ENCODE measurements at regions of chr20 and their contacts with region 1.

Region 1: DNA sequence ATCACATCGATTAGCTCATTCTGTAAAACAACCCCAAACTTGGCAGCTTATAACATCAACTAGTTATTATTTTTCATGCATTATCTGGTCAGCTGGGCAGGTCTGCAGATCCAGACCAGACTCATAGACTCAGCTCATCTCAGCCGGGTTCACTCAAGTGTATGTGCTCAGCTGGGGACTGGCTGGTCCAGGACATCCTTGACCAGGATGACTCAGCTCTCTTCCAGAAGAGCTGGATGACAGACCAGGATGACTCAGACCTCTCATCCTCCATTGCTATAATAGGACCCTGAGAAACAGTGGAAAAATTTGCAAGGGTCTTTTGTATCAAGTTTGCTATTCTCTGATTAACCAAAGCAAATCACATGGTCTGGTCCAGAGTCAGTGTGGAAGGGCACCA is 312.5 kb upstream of the PLCB4 start:
- DNase-seq: peak; percentile 57
- H3K4me3 ChIP-seq: no peak overlapping the region
- H3K27ac ChIP-seq: no peak overlapping the region
- H3K27me3 ChIP-seq: no peaks in the 10 kb centered on the region
- CTCF ChIP-seq: no peak

Region 2: DNA sequence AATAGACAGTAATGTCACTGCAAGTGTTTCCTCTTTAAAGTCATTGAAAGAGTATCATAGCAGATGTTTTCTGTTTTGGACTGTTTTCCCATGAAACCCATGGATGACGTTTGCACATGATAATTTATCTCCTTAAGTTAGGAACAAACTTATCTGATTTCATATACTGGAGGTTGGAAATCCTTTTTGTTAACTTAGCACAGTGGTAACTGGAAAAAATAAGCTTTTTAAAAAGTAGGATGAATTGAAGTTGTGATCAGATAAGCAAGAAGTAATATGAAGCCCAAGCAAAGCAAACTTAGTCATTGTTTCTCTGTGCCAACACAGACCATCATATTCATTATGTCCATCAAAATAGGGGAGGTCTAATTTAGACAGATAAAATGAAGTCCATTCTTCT is 374.1 kb after region 1 on chr20:
- CTCF ChIA-PET with region 1: interaction called, 12 read pairs
- POLR2A ChIA-PET with region 1: no interaction called
- DNase-seq: no peak
- H3K4me3 ChIP-seq: no peak overlapping the region
- H3K27ac ChIP-seq: no peak overlapping the region
- H3K27me3 ChIP-seq: no peaks in the 10 kb centered on the region
- CTCF ChIP-seq: no peak

Region 3: GRCh38 chr20:9244811-9245210 is 488.4 kb after region 1 on chr20:
- CTCF ChIA-PET with region 1: interaction called, 10 read pairs
- POLR2A ChIA-PET with region 1: no interaction called
- DNase-seq: no peak
- H3K4me3 ChIP-seq: no peak overlapping the region
- H3K27ac ChIP-seq: no peak overlapping the region
- H3K27me3 ChIP-seq: no peaks in the 10 kb centered on the region
- CTCF ChIP-seq: no peak

Region 4: DNA sequence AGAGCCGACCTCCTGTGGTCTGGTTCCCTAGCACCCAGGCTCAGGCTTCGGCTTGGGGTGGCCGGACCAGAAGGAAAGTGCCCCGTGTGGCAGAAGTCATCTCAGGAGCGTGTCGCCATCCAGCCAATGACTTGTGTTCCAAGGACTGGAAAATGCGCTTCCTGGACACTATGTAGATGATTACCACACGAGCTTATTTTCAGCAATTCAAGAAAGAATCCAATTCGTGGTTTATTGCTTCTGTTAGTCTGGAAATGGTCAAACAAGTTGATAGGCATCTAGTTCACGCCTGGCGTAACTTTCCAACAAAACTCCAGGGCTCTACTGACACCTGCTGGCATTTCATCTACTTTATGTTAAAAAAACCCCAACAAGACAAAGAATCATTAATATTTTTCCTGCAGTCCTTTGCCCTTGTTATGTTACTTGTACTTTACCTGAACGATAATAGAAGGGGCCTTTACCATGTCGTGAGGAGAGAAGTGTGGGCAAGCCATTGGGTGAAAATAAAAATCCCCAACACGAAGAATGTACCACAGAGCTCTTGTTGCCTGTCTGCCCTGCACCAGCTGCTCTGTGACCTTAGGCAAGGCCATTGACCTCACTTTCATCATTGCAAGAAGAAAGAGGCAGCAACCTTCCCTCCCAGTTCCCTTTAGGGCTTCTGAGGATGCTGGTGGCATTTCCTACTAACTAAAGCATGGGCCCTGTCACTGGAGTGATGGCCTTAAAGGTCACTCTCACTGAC is 603.3 kb after region 1 on chr20:
- CTCF ChIA-PET with region 1: interaction called, 11 read pairs
- POLR2A ChIA-PET with region 1: no interaction called
- DNase-seq: no peak
- H3K4me3 ChIP-seq: no peak overlapping the region
- H3K27ac ChIP-seq: no peak overlapping the region
- H3K27me3 ChIP-seq: no peaks in the 10 kb centered on the region
- CTCF ChIP-seq: peak; percentile 56